PC-3 (cell line): ENCODE measurements at regions of chrX and their contacts with region 1.

Region 1: DNA sequence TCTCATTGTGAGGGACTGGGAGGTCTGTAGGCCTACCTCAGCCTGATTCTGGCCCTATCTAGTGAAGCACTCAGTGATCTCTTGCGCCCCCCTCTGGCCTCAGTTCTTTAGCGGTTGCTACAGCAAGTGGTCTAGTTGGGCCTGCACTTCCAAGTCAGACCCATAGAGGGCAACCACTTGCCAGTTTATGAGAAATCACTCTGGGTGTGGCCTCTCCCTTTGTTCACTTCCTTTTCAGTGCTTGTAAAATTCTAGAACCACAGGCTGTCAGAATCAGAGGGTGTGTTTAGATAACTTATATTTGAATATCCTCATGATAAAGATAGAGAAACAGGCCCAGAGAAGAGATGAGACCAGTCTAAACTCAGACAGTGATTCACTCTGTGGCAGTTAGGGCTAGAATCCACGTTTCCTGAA is 60.9 kb upstream of the LAS1L start:
- DNase-seq: peak; percentile 97
- ATAC-seq: peak; percentile 89
- H3K4me3 ChIP-seq: no peak overlapping the region
- H3K27ac ChIP-seq: peak overlapping the region; percentile 77
- H3K4me1 ChIP-seq: peaks cover 12% of the 10 kb centered on the region
- H3K27me3 ChIP-seq: no peaks in the 10 kb centered on the region
- CTCF ChIP-seq: peak; percentile 98

Region 2: DNA sequence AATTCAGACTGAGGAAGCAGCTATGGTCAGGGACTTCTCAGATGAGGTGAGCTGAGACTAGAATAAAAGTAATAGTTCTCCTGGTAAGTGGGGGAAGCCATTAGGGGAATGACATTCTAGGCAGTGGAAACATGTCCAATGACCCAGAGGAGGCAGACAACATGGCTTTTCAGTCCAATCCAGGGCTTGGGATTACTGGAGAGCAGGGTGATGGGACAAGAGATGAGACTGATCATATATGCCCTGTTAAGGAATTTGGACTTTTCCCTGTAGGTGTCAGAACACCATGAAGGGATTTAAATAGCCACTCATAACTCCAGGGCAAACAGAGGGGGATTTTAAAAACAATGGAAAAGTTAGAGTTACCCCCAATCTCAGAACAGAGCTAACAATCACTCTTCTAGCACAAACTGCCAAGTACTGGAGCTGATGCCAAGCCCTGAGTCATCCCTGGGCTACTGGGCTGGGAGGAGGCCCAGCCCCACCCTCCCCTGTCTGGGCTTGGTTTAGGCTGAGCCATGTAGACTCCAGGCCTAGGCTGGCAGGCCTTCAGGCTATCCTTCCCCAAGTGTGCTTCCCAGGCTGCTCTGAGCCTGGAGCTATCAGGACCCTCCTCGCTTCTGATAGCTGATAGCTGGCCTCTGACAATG is 49.3 kb after region 1 on chrX:
- CTCF ChIA-PET with region 1: no interaction called
- POLR2A ChIA-PET with region 1: no interaction called
- intact Hi-C with region 1: loop called (anchors 5 kb)
- DNase-seq: peak; percentile 91
- ATAC-seq: peak; percentile 95
- H3K4me3 ChIP-seq: no peak overlapping the region
- H3K27ac ChIP-seq: peak overlapping the region; percentile 39
- H3K4me1 ChIP-seq: peaks cover 31% of the 10 kb centered on the region
- H3K27me3 ChIP-seq: no peaks in the 10 kb centered on the region
- CTCF ChIP-seq: no peak

Region 3: GRCh38 chrX:65667503-65668376 is 72.3 kb after region 1 on chrX and contains the start of gene MSN:
- CTCF ChIA-PET with region 1: no interaction called
- POLR2A ChIA-PET with region 1: interaction called, 27 read pairs
- intact Hi-C with region 1: loop called (anchors 1 kb)
- DNase-seq: peak; percentile 66
- ATAC-seq: peak; percentile 71
- H3K4me3 ChIP-seq: peak within 1 kb of the TSS; percentile 99
- H3K27ac ChIP-seq: peak within 1 kb of the TSS; percentile 99
- H3K4me1 ChIP-seq: peaks cover 34% of the 10 kb centered on the region
- H3K27me3 ChIP-seq: no peaks in the 10 kb centered on the region
- CTCF ChIP-seq: 0 out of 2 replicates have a peak, but pooled peaks have one; percentile 13
- total RNA-seq, gene MSN: 308 and 350 TPM in 2 replicates

Region 4: GRCh38 chrX:65706041-65706828 is 110.8 kb after region 1 on chrX:
- CTCF ChIA-PET with region 1: interaction called, 13 read pairs
- POLR2A ChIA-PET with region 1: interaction called, 12 read pairs
- intact Hi-C with region 1: loop called (anchors 1 kb)
- DNase-seq: peak; percentile 69
- ATAC-seq: peak; percentile 46
- H3K4me3 ChIP-seq: no peak overlapping the region
- H3K27ac ChIP-seq: peak overlapping the region; percentile 68
- H3K4me1 ChIP-seq: peaks cover 39% of the 10 kb centered on the region
- H3K27me3 ChIP-seq: no peaks in the 10 kb centered on the region
- CTCF ChIP-seq: no peak

Region 5: GRCh38 chrX:65985922-65986588 is 390.6 kb after region 1 on chrX:
- CTCF ChIA-PET with region 1: no interaction called
- POLR2A ChIA-PET with region 1: no interaction called
- intact Hi-C with region 1: loop called (anchors 1 kb)
- DNase-seq: peak; percentile 80
- ATAC-seq: peak; percentile 90
- H3K4me3 ChIP-seq: no peak overlapping the region
- H3K27ac ChIP-seq: no peak overlapping the region
- H3K4me1 ChIP-seq: peaks cover 4% of the 10 kb centered on the region; the same call in 1 of the 2 replicates
- H3K27me3 ChIP-seq: no peaks in the 10 kb centered on the region
- CTCF ChIP-seq: peak; percentile 71

Region 6: GRCh38 chrX:67545036-67545821 is 1949.8 kb after region 1 on chrX:
- CTCF ChIA-PET with region 1: no interaction called
- POLR2A ChIA-PET with region 1: interaction called, 19 read pairs
- intact Hi-C with region 1: no loop called
- DNase-seq: no peak
- ATAC-seq: peak; percentile 40
- H3K4me3 ChIP-seq: no peak overlapping the region
- H3K27ac ChIP-seq: no peak overlapping the region
- H3K4me1 ChIP-seq: no peaks in the 10 kb centered on the region
- H3K27me3 ChIP-seq: peaks cover 57% of the 10 kb centered on the region
- CTCF ChIP-seq: no peak